Posterior vena cava (tissue), 2 donors: ENCODE measurements at regions of chr2 and their contacts with region 1.

Region 1: DNA sequence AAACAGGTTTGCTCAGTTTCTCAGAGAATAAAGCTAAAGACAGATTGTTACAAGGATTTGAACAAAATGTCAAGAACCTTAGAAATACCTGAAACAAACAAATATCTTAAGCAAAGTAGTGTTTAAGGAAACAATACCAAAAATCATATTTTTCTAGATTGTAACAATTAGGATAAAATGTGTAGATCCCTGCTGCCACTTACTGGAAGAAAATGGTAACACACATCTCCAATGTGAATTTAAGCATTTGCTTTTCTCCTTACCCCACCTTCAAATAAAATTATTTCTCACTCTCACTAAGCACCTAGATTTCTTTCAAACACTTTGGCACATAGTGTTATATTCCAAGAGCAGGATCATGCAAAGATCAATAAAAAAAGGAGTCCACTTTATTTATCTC is 34.9 kb downstream of the SUCLG1 start:
- DNase-seq: no peak

Region 2: GRCh38 chr2:84449055-84449454 is 24.9 kb after region 1 on chr2:
- intact Hi-C with region 1: no loop called
- DNase-seq: no peak

Region 3: DNA sequence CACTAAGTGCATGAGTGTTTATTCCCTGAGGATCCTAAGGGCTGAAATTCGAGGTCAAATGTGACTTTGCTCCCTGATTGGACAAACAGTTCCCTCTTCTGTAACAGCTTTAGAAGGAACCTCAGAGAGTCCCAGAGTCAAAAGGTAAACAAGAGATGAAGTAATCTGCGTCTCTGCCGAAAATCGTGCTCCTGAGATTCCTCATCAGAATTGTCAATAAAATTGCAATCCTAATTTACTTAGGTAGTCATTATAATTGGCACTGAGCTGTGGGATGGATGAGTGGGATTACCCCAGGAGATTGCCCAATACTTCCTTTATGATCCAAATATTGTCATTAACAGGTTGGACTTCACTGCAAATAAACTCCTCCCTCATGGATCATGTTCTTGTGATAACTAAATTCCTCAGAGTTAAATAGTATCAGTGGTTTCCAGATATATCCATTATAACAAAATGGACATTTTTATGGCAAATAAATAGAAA is 35.8 kb after region 1 on chr2:
- intact Hi-C with region 1: loop called in 1 of 2 experiments (anchors 1 kb)
- DNase-seq: no peak